Heart left ventricle (tissue), 16 donors: ENCODE measurements at regions of chr4 and their contacts with region 1.

Region 1: GRCh38 chr4:150867148-150867547 is 147.9 kb downstream of the LRBA start:
- DNase-seq: peak in 1 of 5 donors; percentile 29
- ATAC-seq: peak in 3 of 4 donors; percentile 75 to 78 (median 76)
- H3K4me3 ChIP-seq: no peak overlapping the region
- H3K27ac ChIP-seq: no peak overlapping the region
- H3K4me1 ChIP-seq: no peaks in the 10 kb centered on the region
- H3K27me3 ChIP-seq: no peaks in the 10 kb centered on the region
- CTCF ChIP-seq: peak; percentile 50 to 77 (median 64)
- POLR2A ChIP-seq: no peak

Region 2: GRCh38 chr4:149980941-149981340 is 886.2 kb before region 1 on chr4:
- intact Hi-C with region 1: loop called in 2 of 10 experiments (anchors 10 kb)
- DNase-seq: peak in 4 of 5 donors; percentile 18 to 32 (median 30)
- ATAC-seq: peak in 2 of 4 donors; percentile 45 to 49
- H3K4me3 ChIP-seq: no peak overlapping the region
- H3K27ac ChIP-seq: no peak overlapping the region
- H3K4me1 ChIP-seq: no peaks in the 10 kb centered on the region
- H3K27me3 ChIP-seq: no peaks in the 10 kb centered on the region
- CTCF ChIP-seq: peak; percentile 56 to 85 (median 76)
- POLR2A ChIP-seq: no peak

Region 3: GRCh38 chr4:150297861-150298474 is 569.2 kb before region 1 on chr4:
- intact Hi-C with region 1: loop called (anchors 2 to 5 kb)
- DNase-seq: peak in 1 of 5 donors; percentile 27
- ATAC-seq: no peak
- H3K4me3 ChIP-seq: no peak overlapping the region
- H3K27ac ChIP-seq: peak overlapping the region in 1 of 12 donors; percentile 49
- H3K4me1 ChIP-seq: no peaks in the 10 kb centered on the region
- H3K27me3 ChIP-seq: no peaks in the 10 kb centered on the region
- CTCF ChIP-seq: peak; percentile 43 to 75 (median 62)
- POLR2A ChIP-seq: no peak

Region 4: GRCh38 chr4:150722908-150723362 is 144.2 kb before region 1 on chr4:
- intact Hi-C with region 1: loop called in 6 of 10 experiments (anchors 1 to 10 kb)
- DNase-seq: peak; percentile 80 to 95 (median 84)
- ATAC-seq: peak; percentile 98 to 100 (median 100)
- H3K4me3 ChIP-seq: no peak overlapping the region
- H3K27ac ChIP-seq: peak overlapping the region in 11 of 12 donors; percentile 21 to 79 (median 61)
- H3K4me1 ChIP-seq: peaks cover 0 to 36% (median 12%) of the 10 kb centered on the region in 12 donors
- H3K27me3 ChIP-seq: no peaks in the 10 kb centered on the region
- CTCF ChIP-seq: peak in 11 of 12 donors; percentile 33 to 73 (median 49)
- POLR2A ChIP-seq: no peak